Gastrocnemius medialis (tissue), 4 donors: ENCODE measurements at regions of chr17 and their contacts with region 1.

Region 1: DNA sequence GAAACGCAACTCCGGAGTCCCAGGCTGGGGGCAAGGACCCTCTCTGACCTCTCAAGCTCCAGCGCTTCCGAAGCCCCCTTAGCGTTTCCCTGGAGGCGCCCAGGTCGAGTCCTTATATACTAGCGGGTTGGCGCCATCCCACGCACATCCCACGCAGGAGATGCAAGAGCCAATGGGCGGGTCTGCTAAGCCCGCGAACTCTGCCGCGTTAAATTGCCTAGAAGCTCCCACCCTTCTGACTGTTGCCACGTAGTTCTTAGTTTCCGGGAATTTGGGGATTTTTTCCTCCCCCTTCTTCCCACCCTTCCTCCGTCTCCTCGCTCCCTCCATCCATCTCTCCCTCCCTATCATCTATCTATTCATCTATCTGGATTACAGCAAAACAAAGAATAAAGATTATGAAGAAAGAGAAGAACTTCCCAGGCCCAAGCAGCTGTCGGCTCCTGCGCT is at the start of gene SLFN11:
- DNase-seq: peak; percentile 72 to 76
- ATAC-seq: peak; percentile 80 to 88
- H3K4me3 ChIP-seq: peak within 1 kb of the TSS; percentile 68 to 83 (median 71)
- H3K27ac ChIP-seq: peak within 1 kb of the TSS; percentile 89 to 91 (median 90)
- H3K4me1 ChIP-seq: peaks cover 10 to 12% of the 10 kb centered on the region in 2 donors
- H3K27me3 ChIP-seq: peaks cover 28 to 37% (median 35%) of the 10 kb centered on the region in 3 donors
- CTCF ChIP-seq: no peak
- POLR2A ChIP-seq: peak; percentile 75 to 92
- total RNA-seq, gene SLFN11: 8.9 to 11.8 (median 10.0) TPM

Region 2: GRCh38 chr17:35254107-35254802 is 119.3 kb before region 1 on chr17:
- in situ Hi-C with region 1: no loop called
- intact Hi-C with region 1: loop called (anchors 10 kb)
- DNase-seq: peak; percentile 82 to 85
- ATAC-seq: peak; percentile 98 to 99
- H3K4me3 ChIP-seq: no peak overlapping the region
- H3K27ac ChIP-seq: peak overlapping the region; percentile 65 to 81 (median 68)
- H3K4me1 ChIP-seq: peaks cover 26 to 42% of the 10 kb centered on the region in 2 donors
- H3K27me3 ChIP-seq: no peaks in the 10 kb centered on the region
- CTCF ChIP-seq: no peak
- POLR2A ChIP-seq: no peak

Region 3: DNA sequence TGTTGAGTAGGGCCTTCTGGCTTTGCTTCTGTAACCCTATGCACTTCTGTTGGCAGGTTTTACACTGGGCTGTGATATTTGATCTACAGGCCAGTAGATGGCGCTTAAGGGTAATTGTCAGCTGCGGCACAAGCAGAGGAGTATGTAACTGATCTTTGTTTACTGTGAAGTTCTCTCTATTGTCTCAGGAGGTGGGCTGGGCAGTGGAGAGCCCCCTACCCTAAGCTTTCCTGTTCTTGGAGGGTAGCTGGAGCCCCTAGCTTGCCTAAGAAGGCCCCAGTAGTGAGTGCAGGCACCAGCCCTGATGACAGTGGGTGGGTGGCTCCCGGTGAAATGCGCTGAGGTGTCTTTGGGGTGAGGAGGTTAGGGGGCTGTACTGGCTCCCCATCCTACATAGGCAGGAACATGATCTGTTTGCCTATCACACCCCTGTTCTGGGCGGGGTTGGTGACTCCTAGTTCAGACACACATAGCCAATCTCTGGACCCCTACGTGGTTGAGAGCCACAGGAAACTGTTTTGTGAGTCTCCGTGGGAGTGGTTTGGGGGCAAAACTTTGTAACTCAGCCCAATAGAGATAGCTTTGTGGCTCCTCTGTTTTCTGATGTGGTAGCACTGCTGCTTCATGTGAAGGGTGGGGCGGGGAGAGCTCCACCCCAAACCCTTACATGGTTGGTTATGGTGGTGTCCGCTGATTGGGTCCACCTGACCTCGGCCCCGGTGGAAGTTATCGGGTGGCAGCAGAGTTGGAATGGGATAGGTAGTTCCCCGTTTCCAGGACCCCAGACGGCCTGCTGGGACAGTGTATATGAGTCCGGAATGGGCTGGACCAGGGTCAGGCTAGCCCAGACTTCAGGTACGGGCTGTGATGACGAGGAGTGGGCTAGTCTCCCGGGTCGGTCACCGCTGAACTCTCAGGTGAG is 60.5 kb before region 1 on chr17:
- in situ Hi-C with region 1: no loop called
- intact Hi-C with region 1: loop called (anchors 2 kb)
- DNase-seq: peak; percentile 53 to 58
- ATAC-seq: peak; percentile 64 to 86
- H3K4me3 ChIP-seq: peak overlapping the region; percentile 52 to 69 (median 56)
- H3K27ac ChIP-seq: peak overlapping the region; percentile 79 to 88 (median 85)
- H3K4me1 ChIP-seq: peaks cover 18 to 39% of the 10 kb centered on the region in 2 donors
- H3K27me3 ChIP-seq: no peaks in the 10 kb centered on the region
- CTCF ChIP-seq: peak; percentile 67 to 85 (median 80)
- POLR2A ChIP-seq: peak; percentile 18 to 72

Region 4: GRCh38 chr17:35432176-35433074 is 58.9 kb after region 1 on chr17 and contains the start of gene SLFN12:
- in situ Hi-C with region 1: no loop called
- intact Hi-C with region 1: loop called (anchors 10 kb)
- DNase-seq: peak; percentile 24 to 35
- ATAC-seq: peak; percentile 82 to 83
- H3K4me3 ChIP-seq: peak within 1 kb of the TSS; percentile 53 to 67 (median 58)
- H3K27ac ChIP-seq: peak within 1 kb of the TSS; percentile 72 to 78 (median 75)
- H3K4me1 ChIP-seq: peaks cover 0 to 8% of the 10 kb centered on the region in 2 donors
- H3K27me3 ChIP-seq: peaks cover 7 to 15% (median 13%) of the 10 kb centered on the region in 3 donors
- CTCF ChIP-seq: no peak
- POLR2A ChIP-seq: peak in 1 of 2 donors; percentile 32
- total RNA-seq, gene SLFN12: 0.76 to 2.2 (median 1.3) TPM